A549 (cell line): ENCODE measurements at regions of chr19 and their contacts with region 1.

Region 1: DNA sequence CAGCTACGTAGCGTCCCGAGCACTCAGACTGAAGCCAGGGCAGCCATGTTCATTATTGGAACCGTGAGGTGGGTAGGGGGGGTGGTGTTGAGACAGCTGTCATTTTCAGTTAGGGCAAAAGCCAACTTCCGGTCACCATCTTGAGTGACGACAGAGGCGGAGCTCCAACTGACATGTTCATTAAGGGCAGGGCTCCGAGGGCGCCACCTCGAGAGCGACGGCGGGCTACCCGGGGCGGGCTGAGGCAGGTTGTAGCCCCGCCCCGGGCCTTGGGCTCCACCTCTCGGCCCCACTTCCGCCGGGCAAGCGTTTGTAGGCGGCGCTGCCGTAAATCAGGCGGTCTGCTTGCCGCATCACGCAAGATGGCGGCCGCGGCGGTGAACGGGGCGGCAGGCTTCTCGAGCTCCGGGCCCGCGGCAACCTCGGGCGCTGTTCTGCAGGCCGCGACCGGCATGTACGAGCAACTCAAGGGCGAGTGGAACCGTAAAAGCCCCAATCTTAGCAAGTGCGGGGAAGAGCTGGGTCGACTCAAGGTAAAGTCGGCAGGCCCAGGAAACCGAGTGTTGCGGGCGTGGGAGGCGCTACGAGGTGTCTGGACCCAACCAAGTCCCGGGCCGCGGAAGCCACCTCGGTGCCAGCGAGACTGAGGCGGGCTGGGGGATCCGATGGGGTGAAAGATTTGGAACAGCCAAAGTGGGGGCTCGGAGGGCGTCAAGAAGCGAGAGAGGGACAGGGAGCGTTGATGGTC is at the start of gene PSMD8:
- DNase-seq: peak; percentile 100
- ATAC-seq: peak; percentile 91 to 97
- H3K4me3 ChIP-seq: peak within 1 kb of the TSS; percentile 78
- H3K27ac ChIP-seq: peak within 1 kb of the TSS; percentile 88 to 91
- H3K4me1 ChIP-seq: peaks cover 17% of the 10 kb centered on the region
- CTCF ChIP-seq: peak; percentile 40
- EP300 ChIP-seq: no peak
- POLR2A ChIP-seq: peak; percentile 100
- RAD21 ChIP-seq: peak in 1 of 2 experiments; percentile 35; a peak in 3 of 5 replicates
- polyA plus RNA-seq, gene PSMD8: 437 and 469 TPM in 2 replicates

Region 2: GRCh38 chr19:38107129-38107528 is 267.5 kb before region 1 on chr19:
- CTCF ChIA-PET with region 1: no interaction called
- POLR2A ChIA-PET with region 1: no interaction called
- DNase-seq: no peak
- ATAC-seq: peak in 1 of 2 experiments; percentile 8; a peak in 1 of 6 replicates
- H3K4me3 ChIP-seq: no peak overlapping the region
- H3K27ac ChIP-seq: peak overlapping the region in 1 of 2 experiments; percentile 5; a peak in 1 of 6 replicates
- H3K4me1 ChIP-seq: peaks cover 9% of the 10 kb centered on the region; the same call in 2 of the 3 replicates
- CTCF ChIP-seq: no peak
- EP300 ChIP-seq: no peak
- POLR2A ChIP-seq: no peak
- RAD21 ChIP-seq: no peak

Region 3: GRCh38 chr19:38361633-38362075 is 12.9 kb before region 1 on chr19:
- CTCF ChIA-PET with region 1: interaction called, 15 read pairs
- POLR2A ChIA-PET with region 1: interaction called, 41 read pairs
- DNase-seq: peak; percentile 96 to 99
- ATAC-seq: peak; percentile 81 to 93
- H3K4me3 ChIP-seq: peak overlapping the region; percentile 65
- H3K27ac ChIP-seq: peak overlapping the region; percentile 62 to 81
- H3K4me1 ChIP-seq: peaks cover 9% of the 10 kb centered on the region; the same call in 1 of the 3 replicates
- CTCF ChIP-seq: no peak
- EP300 ChIP-seq: no peak
- POLR2A ChIP-seq: no peak
- RAD21 ChIP-seq: no peak